ENCODE measurements at regions of chr1 and their contacts with region 1.

Region 1: DNA sequence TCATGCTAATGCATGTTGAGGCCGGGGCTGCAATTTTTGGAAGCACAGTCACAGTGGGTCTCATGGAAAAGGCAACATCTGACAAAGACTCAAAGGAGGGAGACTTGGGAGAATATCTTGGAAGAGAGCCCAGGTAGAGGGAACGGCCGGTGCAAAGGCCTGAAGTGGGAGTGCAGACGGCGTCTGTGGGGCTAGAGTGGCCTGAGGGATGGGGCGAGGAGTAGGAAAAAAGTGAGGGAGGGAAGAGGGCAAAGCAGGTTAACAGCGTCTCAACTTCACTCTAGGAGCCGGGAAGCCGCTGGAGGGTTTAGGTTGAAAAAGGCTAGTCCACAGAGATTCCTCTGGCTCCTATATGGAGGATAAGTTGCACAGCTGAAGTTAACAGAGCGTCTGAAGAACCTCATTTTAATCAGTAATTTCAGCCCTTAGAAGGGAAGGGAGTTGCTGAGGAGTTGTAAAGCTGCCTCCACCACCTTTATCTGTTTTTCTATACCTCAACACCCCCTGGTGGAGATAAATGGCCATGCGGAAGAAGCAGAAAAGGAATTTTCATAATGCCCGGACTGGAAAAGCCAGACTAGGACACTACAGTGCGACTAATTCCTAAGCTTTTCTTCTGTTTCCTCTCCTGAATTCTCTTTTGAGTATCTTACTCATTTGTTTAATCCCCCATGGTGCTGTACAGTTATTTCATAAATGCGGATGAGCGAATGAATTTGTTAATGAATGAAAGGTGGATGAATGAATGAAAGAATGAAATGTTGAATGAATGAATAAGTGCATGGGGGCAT is 78.7 kb upstream of the ZNF281 start:
- DNase-seq: peak; percentile 60
- H3K4me3 Mint-ChIP-seq: no peak overlapping the region
- H3K27ac Mint-ChIP-seq: no peak overlapping the region
- H3K4me1 Mint-ChIP-seq: peaks cover 4% of the 10 kb centered on the region
- H3K27me3 Mint-ChIP-seq: peaks cover 19% of the 10 kb centered on the region

Region 2: GRCh38 chr1:200428482-200429205 is 59.9 kb before region 1 on chr1:
- CTCF ChIA-PET with region 1: no interaction called
- DNase-seq: no peak
- H3K4me3 Mint-ChIP-seq: no peak overlapping the region
- H3K27ac Mint-ChIP-seq: no peak overlapping the region
- H3K4me1 Mint-ChIP-seq: peaks cover 3% of the 10 kb centered on the region
- H3K27me3 Mint-ChIP-seq: peaks cover 4% of the 10 kb centered on the region

Region 3: GRCh38 chr1:200510228-200510623 is 21.7 kb after region 1 on chr1:
- CTCF ChIA-PET with region 1: interaction called, 18 read pairs
- DNase-seq: peak; percentile 76
- H3K4me3 Mint-ChIP-seq: no peak overlapping the region
- H3K27ac Mint-ChIP-seq: no peak overlapping the region
- H3K4me1 Mint-ChIP-seq: no peaks in the 10 kb centered on the region
- H3K27me3 Mint-ChIP-seq: peaks cover 36% of the 10 kb centered on the region